K562 (cell line): ENCODE measurements at regions of chr10 and their contacts with region 1.

Region 1: DNA sequence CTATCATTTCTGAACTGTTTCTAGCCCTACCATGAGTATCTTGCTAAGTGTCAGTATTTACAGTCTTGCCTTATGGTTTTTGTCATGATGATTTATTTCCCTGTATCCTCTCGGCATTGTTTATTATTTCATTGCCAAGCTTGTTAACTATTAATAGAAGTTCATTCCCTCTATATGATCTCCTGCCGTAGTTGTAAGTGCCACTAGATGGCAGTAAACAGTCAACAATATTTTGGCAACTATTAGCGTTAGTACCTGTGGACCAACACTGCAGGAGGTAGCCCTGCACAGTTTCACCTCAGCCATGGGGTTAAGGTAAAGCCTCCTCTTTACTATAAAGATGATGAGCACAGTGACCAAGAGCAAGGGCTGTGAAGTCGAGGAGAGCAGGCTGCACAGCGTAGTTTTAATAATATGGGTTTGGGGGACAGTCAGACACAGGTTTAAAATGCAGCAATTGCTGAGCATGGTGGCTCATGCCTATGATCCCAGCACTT is 26.1 kb upstream of the CCNJ start:
- DNase-seq: peak; percentile 45 to 67 (median 48)
- ATAC-seq: peak; percentile 96
- H3K4me3 ChIP-seq: no peak overlapping the region
- H3K27ac ChIP-seq: no peak overlapping the region
- H3K4me1 ChIP-seq: peaks cover 0 to 3% of the 10 kb centered on the region in 2 experiments; a peak in 2 of 5 replicates
- H3K27me3 ChIP-seq: no peaks in the 10 kb centered on the region
- CTCF ChIP-seq: peak; percentile 55 to 76 (median 66)
- EP300 ChIP-seq: no peak
- POLR2A ChIP-seq: no peak
- RAD21 ChIP-seq: peak; percentile 76 to 86

Region 2: DNA sequence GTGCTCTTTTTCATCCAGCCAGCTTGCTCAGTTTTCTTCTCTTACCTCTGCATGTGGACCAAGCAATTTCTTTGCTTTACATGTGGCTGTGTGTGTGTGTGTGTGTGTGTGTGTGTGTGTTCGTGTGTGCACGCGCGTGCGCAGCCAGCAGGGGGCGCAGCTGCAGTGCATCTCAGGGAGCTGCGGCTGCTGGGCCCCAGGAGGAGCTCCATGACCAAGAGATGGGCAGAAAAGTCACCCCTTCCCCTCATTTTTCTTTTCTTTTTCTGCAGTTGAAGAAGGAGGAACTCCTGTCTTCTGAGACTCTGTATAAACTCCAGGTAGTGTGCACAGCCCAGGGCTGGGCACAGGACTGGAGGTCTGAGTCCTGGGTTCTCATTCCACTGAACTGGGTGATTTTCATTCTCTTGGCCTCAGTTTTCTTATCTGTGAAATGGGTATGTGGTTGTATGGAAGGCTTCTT is 212.4 kb after region 1 on chr10:
- CTCF ChIA-PET with region 1: no interaction called
- POLR2A ChIA-PET with region 1: no interaction called
- in situ Hi-C with region 1: no loop called
- intact Hi-C with region 1: loop called (anchors 5 kb)
- DNase-seq: peak; percentile 53 to 78 (median 64)
- ATAC-seq: peak; percentile 85
- H3K4me3 ChIP-seq: no peak overlapping the region
- H3K27ac ChIP-seq: no peak overlapping the region
- H3K4me1 ChIP-seq: no peaks in the 10 kb centered on the region; a peak in 1 of 5 replicates
- H3K27me3 ChIP-seq: peaks cover 2 to 21% of the 10 kb centered on the region in 2 experiments; a peak in 3 of 5 replicates
- CTCF ChIP-seq: peak; percentile 80 to 96 (median 92)
- EP300 ChIP-seq: no peak
- POLR2A ChIP-seq: no peak
- RAD21 ChIP-seq: peak; percentile 39 to 69; a peak in 3 of 4 replicates

Region 3: DNA sequence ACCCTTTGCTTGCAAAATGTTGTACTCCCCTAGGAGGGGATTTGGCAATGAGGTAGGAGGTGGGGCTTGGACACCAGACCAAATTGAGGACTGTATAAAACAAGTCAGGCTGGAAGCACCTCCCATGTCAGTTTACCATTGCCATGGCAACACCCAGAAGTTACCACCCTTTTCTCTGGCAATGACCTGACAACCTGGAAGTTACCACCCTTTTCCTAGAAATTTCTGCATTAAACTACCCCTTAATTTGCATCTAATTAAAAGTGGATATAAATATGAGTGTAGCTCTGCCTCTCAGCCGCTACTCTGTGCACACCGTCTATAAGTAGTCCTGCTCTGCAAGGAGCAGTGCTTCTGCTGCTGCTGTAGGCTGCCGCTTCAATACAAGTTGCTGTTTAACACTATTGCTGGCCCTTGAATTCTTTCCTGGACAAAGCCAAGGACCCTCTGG is 262.0 kb after region 1 on chr10:
- CTCF ChIA-PET with region 1: no interaction called
- POLR2A ChIA-PET with region 1: no interaction called
- in situ Hi-C with region 1: no loop called
- intact Hi-C with region 1: no loop called
- DNase-seq: no peak
- ATAC-seq: no peak
- H3K4me3 ChIP-seq: no peak overlapping the region
- H3K27ac ChIP-seq: no peak overlapping the region
- H3K4me1 ChIP-seq: no peaks in the 10 kb centered on the region
- H3K27me3 ChIP-seq: peaks cover 0 to 8% of the 10 kb centered on the region in 2 experiments; a peak in 2 of 5 replicates
- CTCF ChIP-seq: no peak
- EP300 ChIP-seq: no peak
- POLR2A ChIP-seq: no peak
- RAD21 ChIP-seq: no peak

Region 4: DNA sequence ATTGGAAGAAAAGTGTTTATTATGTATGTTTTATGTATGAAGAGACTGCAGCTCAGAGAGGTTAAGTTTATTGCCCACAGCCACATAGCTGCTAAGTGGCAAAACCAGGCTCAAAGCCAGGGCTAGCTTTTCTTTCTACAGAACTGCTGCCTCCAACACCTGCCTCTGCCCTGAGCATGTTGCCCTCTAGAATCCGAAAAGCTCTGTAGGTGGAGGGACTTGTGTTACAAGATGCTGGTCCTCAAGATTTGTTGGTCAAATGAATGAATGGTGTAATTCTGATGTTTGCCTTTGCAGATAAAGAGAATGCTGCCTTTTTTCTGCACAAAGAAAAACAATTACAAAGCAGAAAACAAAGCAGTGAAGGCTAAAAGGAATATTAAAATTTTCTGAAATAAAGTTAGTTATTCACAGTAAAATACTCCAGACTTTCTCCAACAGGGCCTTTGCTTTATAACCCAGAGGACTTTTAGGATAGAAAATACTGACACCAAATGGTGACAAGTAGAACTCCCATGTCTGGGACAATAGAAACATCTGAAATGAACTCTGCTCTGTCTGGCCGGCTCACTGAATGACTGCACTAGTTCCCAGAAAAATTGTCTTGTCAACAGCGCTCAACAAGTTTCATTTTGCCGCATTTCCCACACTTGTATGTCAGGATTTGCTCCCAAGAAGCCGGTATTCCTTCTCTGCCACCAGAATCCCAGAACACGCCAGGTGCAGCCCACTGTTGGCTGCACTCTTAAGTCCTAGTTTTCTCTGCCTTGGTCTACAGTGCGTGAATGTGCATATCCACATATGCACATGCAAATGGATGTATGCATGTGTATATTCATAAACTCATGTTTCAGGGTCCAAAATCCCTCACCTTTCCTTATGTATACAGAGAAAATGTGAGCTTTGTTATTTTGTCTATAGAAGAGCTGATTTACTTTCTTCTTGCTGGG is 276.0 kb after region 1 on chr10:
- CTCF ChIA-PET with region 1: interaction called, 6 read pairs
- POLR2A ChIA-PET with region 1: no interaction called
- in situ Hi-C with region 1: loop called (anchors 10 kb)
- intact Hi-C with region 1: loop called (anchors 1 kb)
- DNase-seq: peak in 3 of 4 experiments; percentile 8 to 33 (median 19)
- ATAC-seq: peak; percentile 87
- H3K4me3 ChIP-seq: no peak overlapping the region
- H3K27ac ChIP-seq: no peak overlapping the region
- H3K4me1 ChIP-seq: no peaks in the 10 kb centered on the region
- H3K27me3 ChIP-seq: peaks cover 0 to 6% of the 10 kb centered on the region in 2 experiments; a peak in 1 of 5 replicates
- CTCF ChIP-seq: peak; percentile 44 to 66 (median 49); a peak in 5 of 6 replicates
- EP300 ChIP-seq: no peak
- POLR2A ChIP-seq: no peak
- RAD21 ChIP-seq: peak; percentile 72 to 77

Region 5: GRCh38 chr10:96325719-96326373 is 308.6 kb after region 1 on chr10:
- CTCF ChIA-PET with region 1: no interaction called
- POLR2A ChIA-PET with region 1: no interaction called
- in situ Hi-C with region 1: loop called (anchors 10 kb)
- intact Hi-C with region 1: no loop called
- DNase-seq: no peak
- ATAC-seq: no peak
- H3K4me3 ChIP-seq: no peak overlapping the region
- H3K27ac ChIP-seq: no peak overlapping the region
- H3K4me1 ChIP-seq: no peaks in the 10 kb centered on the region
- H3K27me3 ChIP-seq: peaks cover 0 to 8% of the 10 kb centered on the region in 2 experiments; a peak in 2 of 5 replicates
- CTCF ChIP-seq: no peak
- EP300 ChIP-seq: no peak
- POLR2A ChIP-seq: no peak
- RAD21 ChIP-seq: no peak

Region 6: GRCh38 chr10:96339957-96340904 is 323.0 kb after region 1 on chr10:
- CTCF ChIA-PET with region 1: interaction called, 11 read pairs
- POLR2A ChIA-PET with region 1: no interaction called
- in situ Hi-C with region 1: no loop called
- intact Hi-C with region 1: loop called (anchors 2 kb)
- DNase-seq: peak; percentile 44 to 68 (median 49)
- ATAC-seq: peak; percentile 89
- H3K4me3 ChIP-seq: no peak overlapping the region
- H3K27ac ChIP-seq: no peak overlapping the region
- H3K4me1 ChIP-seq: no peaks in the 10 kb centered on the region
- H3K27me3 ChIP-seq: no peaks in the 10 kb centered on the region; a peak in 1 of 5 replicates
- CTCF ChIP-seq: peak; percentile 72 to 78 (median 75)
- EP300 ChIP-seq: no peak
- POLR2A ChIP-seq: no peak
- RAD21 ChIP-seq: peak; percentile 32 to 53